Gastrocnemius medialis (tissue), 4 donors: ENCODE measurements at regions of chr1 and their contacts with region 1.

Region 1: DNA sequence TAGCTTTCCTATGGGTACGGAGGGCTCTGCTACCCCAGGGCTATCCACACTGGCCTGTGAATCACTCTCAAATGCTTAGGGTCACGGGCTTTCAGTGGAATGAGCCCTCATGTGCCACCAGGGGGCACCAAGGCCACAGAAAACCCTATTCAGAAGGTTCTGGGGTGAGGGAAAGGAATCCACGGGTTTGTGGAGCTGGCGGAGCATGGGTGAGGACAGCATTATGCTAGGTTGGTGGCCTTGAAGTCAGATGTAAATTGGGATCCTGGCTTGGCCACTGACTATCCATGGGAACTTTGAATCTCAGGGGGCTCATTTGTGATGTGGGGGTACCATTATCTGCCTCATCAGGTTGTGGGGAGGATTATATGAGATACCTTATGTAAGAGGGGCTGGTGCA is 5.1 kb upstream of the LAMTOR5 start:
- DNase-seq: peak; percentile 31 to 62
- ATAC-seq: peak; percentile 25 to 53
- H3K4me3 ChIP-seq: no peak overlapping the region
- H3K27ac ChIP-seq: no peak overlapping the region
- H3K4me1 ChIP-seq: peaks cover 18 to 27% of the 10 kb centered on the region in 2 donors
- H3K27me3 ChIP-seq: no peaks in the 10 kb centered on the region
- CTCF ChIP-seq: peak; percentile 35 to 67 (median 55)
- POLR2A ChIP-seq: no peak

Region 2: DNA sequence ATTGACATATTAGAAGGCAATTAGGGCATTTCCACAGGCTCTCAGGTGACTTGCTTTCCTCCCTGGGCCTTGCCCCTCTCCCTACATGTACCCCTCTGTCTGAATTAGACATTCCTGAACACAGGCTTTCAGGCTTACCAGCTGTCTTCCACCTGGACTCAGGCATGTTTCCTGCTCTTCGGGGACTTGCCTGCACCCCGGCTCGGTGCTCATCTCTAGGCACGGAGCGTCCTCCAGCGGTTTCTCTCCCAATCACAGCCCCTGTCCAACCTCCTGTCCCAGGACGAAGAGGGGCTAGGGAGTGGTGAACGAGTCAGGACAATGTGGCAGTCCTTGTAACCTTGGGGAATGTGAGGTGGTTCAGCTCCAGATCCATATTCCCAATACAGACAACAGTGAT is 42.6 kb after region 1 on chr1:
- in situ Hi-C with region 1: loop called in 1 of 4 experiments (anchors 5 kb)
- intact Hi-C with region 1: loop called (anchors 1 kb)
- DNase-seq: no peak
- ATAC-seq: no peak
- H3K4me3 ChIP-seq: no peak overlapping the region
- H3K27ac ChIP-seq: no peak overlapping the region
- H3K4me1 ChIP-seq: no peaks in the 10 kb centered on the region
- H3K27me3 ChIP-seq: peaks cover 0 to 3% (median 0%) of the 10 kb centered on the region in 3 donors
- CTCF ChIP-seq: no peak
- POLR2A ChIP-seq: no peak

Region 3: DNA sequence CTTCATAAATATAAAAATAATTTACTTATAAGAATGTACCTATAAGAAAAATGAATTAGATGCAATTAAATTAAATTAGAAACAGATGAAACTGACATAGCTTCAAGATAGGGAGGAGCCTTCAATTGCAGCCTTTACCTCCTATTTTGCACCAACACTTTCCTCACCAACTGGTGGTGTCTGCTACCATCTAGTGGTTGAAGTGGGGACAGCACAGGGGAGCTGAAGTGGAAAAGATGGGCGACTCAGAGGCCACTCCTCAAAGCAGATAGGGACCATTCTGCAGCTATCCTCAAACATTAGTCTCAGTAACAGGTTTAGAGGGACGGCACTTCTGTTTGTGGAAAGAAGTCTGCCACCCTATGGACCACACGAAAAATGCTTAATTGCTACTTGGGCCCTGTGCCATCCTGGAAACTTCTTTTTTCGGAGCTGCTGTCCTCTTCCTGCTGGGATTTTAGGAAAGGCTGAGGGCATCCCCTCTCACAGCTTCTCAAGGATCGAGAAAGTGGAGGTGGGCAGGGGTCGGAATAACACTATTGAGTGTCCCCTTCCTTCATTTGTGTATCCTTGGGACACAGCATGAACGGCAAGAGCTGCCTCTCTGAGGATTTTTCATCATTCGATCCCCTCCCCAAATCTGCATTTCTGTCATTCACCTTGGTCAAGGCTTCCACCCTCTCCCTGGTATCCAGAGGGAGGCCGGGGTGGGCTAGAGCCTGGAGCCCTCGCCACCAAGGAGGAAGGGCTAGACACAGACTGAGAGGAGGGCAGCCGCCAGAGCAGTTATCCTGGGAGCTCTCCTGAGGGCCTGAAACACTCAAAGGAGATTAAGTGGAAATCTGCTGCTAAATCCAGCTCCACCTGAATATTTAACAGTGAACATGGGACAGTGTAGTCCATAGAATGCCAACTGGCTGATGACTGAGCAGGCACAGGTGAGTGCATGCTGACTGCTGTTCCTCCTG is 48.0 kb after region 1 on chr1:
- in situ Hi-C with region 1: loop called in 1 of 4 experiments (anchors 5 kb)
- intact Hi-C with region 1: loop called (anchors 1 kb)
- DNase-seq: peak; percentile 54 to 68
- ATAC-seq: peak; percentile 93 to 95
- H3K4me3 ChIP-seq: no peak overlapping the region
- H3K27ac ChIP-seq: no peak overlapping the region
- H3K4me1 ChIP-seq: no peaks in the 10 kb centered on the region
- H3K27me3 ChIP-seq: no peaks in the 10 kb centered on the region
- CTCF ChIP-seq: peak; percentile 89 to 96 (median 94)
- POLR2A ChIP-seq: no peak

Region 4: GRCh38 chr1:111082421-111083192 is 670.0 kb after region 1 on chr1:
- in situ Hi-C with region 1: no loop called
- intact Hi-C with region 1: no loop called
- DNase-seq: no peak
- ATAC-seq: no peak
- H3K4me3 ChIP-seq: no peak overlapping the region
- H3K27ac ChIP-seq: no peak overlapping the region
- H3K4me1 ChIP-seq: no peaks in the 10 kb centered on the region
- H3K27me3 ChIP-seq: no peaks in the 10 kb centered on the region
- CTCF ChIP-seq: no peak
- POLR2A ChIP-seq: no peak